ENCODE measurements at regions of chr14 and their contacts with region 1.

Region 1: DNA sequence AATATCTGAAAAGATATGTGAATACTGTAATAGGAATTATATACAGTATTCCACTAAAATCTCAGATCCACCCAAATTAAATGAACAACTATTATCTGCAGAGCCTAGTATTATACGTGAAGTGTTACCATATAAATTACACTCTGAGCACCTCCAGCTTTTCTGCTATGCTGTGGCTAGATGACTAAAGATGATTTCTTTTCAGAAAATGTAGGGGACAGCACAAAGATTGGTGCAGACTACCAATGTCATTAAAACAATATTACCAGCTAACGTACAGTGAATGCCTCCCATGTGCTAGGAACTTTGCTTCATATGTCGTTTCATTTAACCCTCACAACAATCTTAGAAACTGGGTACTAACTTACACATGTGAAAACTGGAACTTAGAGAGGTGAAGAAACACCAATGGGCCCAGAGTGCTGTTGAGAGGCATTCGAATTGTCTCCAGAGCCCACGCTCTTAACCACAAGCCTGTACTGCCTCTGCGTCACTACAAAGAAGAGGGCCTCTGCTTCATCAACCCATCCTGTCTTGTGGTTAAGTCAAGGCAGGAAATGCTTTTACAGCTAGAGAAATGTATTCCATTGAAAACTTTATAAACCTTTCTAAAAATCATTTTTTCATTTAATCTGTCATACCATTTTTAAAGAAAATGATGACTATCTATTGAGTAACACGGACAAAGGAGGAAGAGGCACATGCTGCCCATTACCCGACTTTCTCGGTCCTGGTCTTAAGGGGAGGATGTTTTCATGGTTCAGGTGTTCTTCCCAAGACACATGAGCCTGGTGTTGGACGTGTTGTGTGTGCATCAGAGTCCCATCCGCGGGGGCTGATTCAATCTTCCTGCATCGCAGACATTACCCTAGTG is 1.3 kb downstream of the GPR65 start:
- DNase-seq: peak in 8 of 9 donors; percentile 55 to 90 (median 84)
- ATAC-seq: peak; percentile 94
- H3K4me3 ChIP-seq: peak overlapping the region; percentile 66
- H3K4me3 Mint-ChIP-seq: peak overlapping the region; percentile 80 to 96 (median 90)
- H3K27ac ChIP-seq: peak overlapping the region; percentile 81
- H3K27ac Mint-ChIP-seq: peak overlapping the region; percentile 89 to 98 (median 96)
- H3K4me1 ChIP-seq: peaks cover 24 to 32% of the 10 kb centered on the region in 2 donors
- H3K4me1 Mint-ChIP-seq: peaks cover 55 to 82% (median 72%) of the 10 kb centered on the region in 7 donors
- H3K27me3 ChIP-seq: no peaks in the 10 kb centered on the region
- H3K27me3 Mint-ChIP-seq: no peaks in the 10 kb centered on the region

Region 2: GRCh38 chr14:87992718-87993628 is 13.2 kb before region 1 on chr14 and contains the start of gene GALC:
- CTCF ChIA-PET with region 1: interaction called, 19 read pairs
- POLR2A ChIA-PET with region 1: interaction called, 122 read pairs
- intact Hi-C with region 1: loop called (anchors 1 kb)
- DNase-seq: peak; percentile 90 to 93 (median 92)
- ATAC-seq: peak; percentile 88
- H3K4me3 ChIP-seq: peak within 1 kb of the TSS; percentile 62
- H3K4me3 Mint-ChIP-seq: peak within 1 kb of the TSS; percentile 88 to 98 (median 94)
- H3K27ac ChIP-seq: peak within 1 kb of the TSS; percentile 94
- H3K27ac Mint-ChIP-seq: peak within 1 kb of the TSS; percentile 89 to 100 (median 99)
- H3K4me1 ChIP-seq: peaks cover 16 to 39% of the 10 kb centered on the region in 2 donors
- H3K4me1 Mint-ChIP-seq: peaks cover 40 to 74% (median 70%) of the 10 kb centered on the region in 7 donors
- H3K27me3 ChIP-seq: no peaks in the 10 kb centered on the region
- H3K27me3 Mint-ChIP-seq: no peaks in the 10 kb centered on the region
- total RNA-seq, gene GALC: 17.8 to 26.1 (median 22.3) TPM

Region 3: DNA sequence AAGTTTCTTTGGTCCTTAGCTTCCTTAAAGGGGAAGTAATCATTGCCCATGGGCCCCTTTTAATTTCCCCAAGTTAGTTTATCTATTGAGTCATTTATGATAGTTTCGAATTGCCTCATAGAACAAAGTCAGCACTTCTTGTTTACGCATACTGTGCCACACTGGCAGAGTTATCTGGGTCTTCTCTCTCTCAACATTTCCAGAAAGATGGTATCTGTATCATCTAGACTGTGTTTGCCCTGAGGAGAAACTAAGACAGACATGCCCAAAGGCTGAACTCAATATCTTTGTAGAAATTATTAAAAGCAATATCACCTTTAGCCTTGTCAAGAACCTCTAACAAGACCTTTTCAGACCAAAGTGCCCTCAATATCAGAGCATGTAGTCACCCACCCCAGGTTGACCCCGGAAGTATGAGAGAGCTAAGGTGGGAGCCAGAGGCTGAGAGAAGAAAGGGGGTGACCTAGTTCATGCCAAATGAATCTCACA is 38.7 kb after region 1 on chr14:
- CTCF ChIA-PET with region 1: no interaction called
- POLR2A ChIA-PET with region 1: no interaction called
- intact Hi-C with region 1: loop called in 1 of 2 experiments (anchors 5 kb)
- DNase-seq: no peak
- ATAC-seq: peak; percentile 48
- H3K4me3 ChIP-seq: no peak overlapping the region
- H3K4me3 Mint-ChIP-seq: no peak overlapping the region
- H3K27ac ChIP-seq: no peak overlapping the region
- H3K27ac Mint-ChIP-seq: no peak overlapping the region
- H3K4me1 ChIP-seq: no peaks in the 10 kb centered on the region
- H3K4me1 Mint-ChIP-seq: peaks cover 0 to 9% (median under 1%) of the 10 kb centered on the region in 7 donors
- H3K27me3 ChIP-seq: no peaks in the 10 kb centered on the region
- H3K27me3 Mint-ChIP-seq: peaks cover 0 to 5% (median 0%) of the 10 kb centered on the region in 5 donors

Region 4: DNA sequence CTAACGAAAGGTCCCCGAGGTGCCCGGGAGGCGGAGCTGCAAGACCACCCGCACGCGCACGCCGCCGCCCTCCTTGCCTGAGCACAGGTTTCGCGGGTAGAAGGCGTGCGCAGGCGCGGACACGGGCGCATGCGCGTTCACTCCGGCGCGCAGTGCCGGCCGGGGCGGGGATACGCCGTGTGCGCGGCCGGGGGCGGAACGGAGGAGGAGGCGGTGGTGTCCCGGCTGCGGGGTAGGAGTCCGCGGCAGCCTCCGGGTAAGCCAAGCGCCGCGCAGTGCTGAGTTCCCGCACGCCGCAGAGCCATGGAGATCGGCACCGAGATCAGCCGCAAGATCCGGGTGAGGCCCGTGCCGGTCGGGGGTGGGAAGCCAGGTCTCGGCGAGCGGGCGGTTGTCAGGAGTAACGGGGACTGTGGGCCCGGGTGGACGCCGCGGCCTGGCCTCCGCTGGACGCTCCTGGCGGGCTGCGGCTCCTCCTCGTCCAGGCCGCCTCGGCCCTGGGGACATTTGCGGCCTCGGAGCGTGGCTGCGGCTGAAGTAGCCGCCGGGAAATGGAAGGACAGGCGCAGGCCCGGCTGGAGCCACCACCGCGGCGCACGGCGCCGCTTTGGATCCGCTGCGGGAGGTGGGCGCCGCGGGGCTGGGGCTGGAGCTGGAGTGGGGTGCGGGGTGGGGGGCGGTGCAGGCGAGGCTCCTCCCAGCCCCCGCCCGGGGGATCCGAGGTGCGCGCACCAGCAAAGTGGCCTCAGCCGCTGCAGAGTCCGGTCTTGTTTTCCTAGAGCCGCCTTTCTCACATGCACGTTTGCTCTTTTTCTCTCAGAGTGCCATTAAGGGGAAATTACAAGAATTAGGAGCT is 556.8 kb after region 1 on chr14 and contains the start of gene ZC3H14:
- CTCF ChIA-PET with region 1: no interaction called
- POLR2A ChIA-PET with region 1: no interaction called
- intact Hi-C with region 1: loop called (anchors 5 to 10 kb)
- DNase-seq: peak; percentile 80 to 91 (median 88)
- ATAC-seq: peak; percentile 98
- H3K4me3 ChIP-seq: peak within 1 kb of the TSS; percentile 84
- H3K4me3 Mint-ChIP-seq: peak within 1 kb of the TSS; percentile 89 to 96 (median 92)
- H3K27ac ChIP-seq: peak within 1 kb of the TSS; percentile 72
- H3K27ac Mint-ChIP-seq: peak within 1 kb of the TSS; percentile 49 to 94 (median 84)
- H3K4me1 ChIP-seq: peaks cover 12 to 13% of the 10 kb centered on the region in 2 donors
- H3K4me1 Mint-ChIP-seq: peaks cover 19 to 44% (median 38%) of the 10 kb centered on the region in 7 donors
- H3K27me3 ChIP-seq: no peaks in the 10 kb centered on the region
- H3K27me3 Mint-ChIP-seq: peaks cover 0 to 27% (median 0%) of the 10 kb centered on the region in 5 donors
- total RNA-seq, gene ZC3H14: 40.1 to 66.2 (median 45.6) TPM

Region 5: GRCh38 chr14:89430391-89431236 is 1424.4 kb after region 1 on chr14:
- CTCF ChIA-PET with region 1: no interaction called
- POLR2A ChIA-PET with region 1: no interaction called
- intact Hi-C with region 1: loop called in 1 of 2 experiments (anchors 10 kb)
- DNase-seq: peak in 7 of 9 donors; percentile 59 to 85 (median 78)
- ATAC-seq: peak; percentile 84
- H3K4me3 ChIP-seq: peak overlapping the region; percentile 56
- H3K4me3 Mint-ChIP-seq: peak overlapping the region; percentile 75 to 88 (median 82)
- H3K27ac ChIP-seq: peak overlapping the region; percentile 68
- H3K27ac Mint-ChIP-seq: peak overlapping the region; percentile 72 to 93 (median 83)
- H3K4me1 ChIP-seq: peaks cover 29 to 30% of the 10 kb centered on the region in 2 donors
- H3K4me1 Mint-ChIP-seq: peaks cover 28 to 77% (median 63%) of the 10 kb centered on the region in 7 donors
- H3K27me3 ChIP-seq: no peaks in the 10 kb centered on the region
- H3K27me3 Mint-ChIP-seq: no peaks in the 10 kb centered on the region

Measured in naive thymus-derived CD4-positive, alpha-beta T cell (primary cell).